PC-9 (cell line): ENCODE measurements at regions of chr1 and their contacts with region 1.

Region 1: GRCh38 chr1:4657244-4657789 is 2.9 kb downstream of the AJAP1 start:
- DNase-seq: no peak
- H3K4me3 ChIP-seq: no peak overlapping the region
- H3K27ac ChIP-seq: no peak overlapping the region
- H3K4me1 ChIP-seq: no peaks in the 10 kb centered on the region
- H3K27me3 ChIP-seq: peaks cover 5% of the 10 kb centered on the region; the same call in 1 of the 2 replicates
- CTCF ChIP-seq: no peak

Region 2: DNA sequence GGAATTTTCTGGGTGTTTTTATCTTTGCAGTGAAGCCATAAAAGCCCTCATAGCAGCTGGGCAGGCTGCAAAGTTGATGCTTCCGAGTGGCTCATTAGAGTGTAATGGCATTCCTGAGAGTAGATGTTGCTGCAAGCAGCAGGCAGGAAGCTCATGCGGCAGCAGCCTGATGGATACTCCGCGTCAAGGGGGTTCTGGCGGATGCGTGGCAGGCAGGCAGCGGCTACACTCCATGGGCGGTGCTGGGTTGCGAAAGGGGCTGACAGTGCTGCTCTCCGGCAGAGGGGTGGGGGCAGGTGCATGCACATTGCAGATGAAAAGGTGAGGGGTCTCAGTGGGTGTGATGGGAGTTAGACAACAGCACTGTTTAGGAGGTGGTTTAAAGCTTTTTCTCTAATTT is 96.1 kb before region 1 on chr1:
- CTCF ChIA-PET with region 1: no interaction called
- POLR2A ChIA-PET with region 1: no interaction called
- intact Hi-C with region 1: no loop called
- DNase-seq: no peak
- H3K4me3 ChIP-seq: no peak overlapping the region
- H3K27ac ChIP-seq: no peak overlapping the region
- H3K4me1 ChIP-seq: no peaks in the 10 kb centered on the region
- H3K27me3 ChIP-seq: peaks cover 4% of the 10 kb centered on the region; the same call in 1 of the 2 replicates
- CTCF ChIP-seq: no peak

Region 3: GRCh38 chr1:4668864-4669700 is 11.8 kb after region 1 on chr1:
- CTCF ChIA-PET with region 1: interaction called, 13 read pairs
- POLR2A ChIA-PET with region 1: no interaction called
- intact Hi-C with region 1: no loop called
- DNase-seq: no peak
- H3K4me3 ChIP-seq: no peak overlapping the region
- H3K27ac ChIP-seq: no peak overlapping the region
- H3K4me1 ChIP-seq: no peaks in the 10 kb centered on the region
- H3K27me3 ChIP-seq: peaks cover 32% of the 10 kb centered on the region
- CTCF ChIP-seq: no peak